ENCODE measurements at regions of chr5 and their contacts with region 1.

Region 1: GRCh38 chr5:178232124-178232919 is at the start of gene PHYKPL:
- DNase-seq: peak; percentile 58
- ATAC-seq: peak; percentile 79
- H3K4me3 ChIP-seq: peak within 1 kb of the TSS; percentile 72
- H3K27ac ChIP-seq: peak within 1 kb of the TSS; percentile 69
- H3K4me1 ChIP-seq: peaks cover 9% of the 10 kb centered on the region
- H3K27me3 ChIP-seq: no peaks in the 10 kb centered on the region
- CTCF ChIP-seq: 0 out of 2 replicates have a peak, but pooled peaks have one; percentile 16
- POLR2A ChIP-seq: peak; percentile 17; the same call in 1 of the 2 replicates
- RAD21 ChIP-seq: no peak
- total RNA-seq, gene PHYKPL: 8.6 and 10.0 TPM in 2 replicates

Region 2: DNA sequence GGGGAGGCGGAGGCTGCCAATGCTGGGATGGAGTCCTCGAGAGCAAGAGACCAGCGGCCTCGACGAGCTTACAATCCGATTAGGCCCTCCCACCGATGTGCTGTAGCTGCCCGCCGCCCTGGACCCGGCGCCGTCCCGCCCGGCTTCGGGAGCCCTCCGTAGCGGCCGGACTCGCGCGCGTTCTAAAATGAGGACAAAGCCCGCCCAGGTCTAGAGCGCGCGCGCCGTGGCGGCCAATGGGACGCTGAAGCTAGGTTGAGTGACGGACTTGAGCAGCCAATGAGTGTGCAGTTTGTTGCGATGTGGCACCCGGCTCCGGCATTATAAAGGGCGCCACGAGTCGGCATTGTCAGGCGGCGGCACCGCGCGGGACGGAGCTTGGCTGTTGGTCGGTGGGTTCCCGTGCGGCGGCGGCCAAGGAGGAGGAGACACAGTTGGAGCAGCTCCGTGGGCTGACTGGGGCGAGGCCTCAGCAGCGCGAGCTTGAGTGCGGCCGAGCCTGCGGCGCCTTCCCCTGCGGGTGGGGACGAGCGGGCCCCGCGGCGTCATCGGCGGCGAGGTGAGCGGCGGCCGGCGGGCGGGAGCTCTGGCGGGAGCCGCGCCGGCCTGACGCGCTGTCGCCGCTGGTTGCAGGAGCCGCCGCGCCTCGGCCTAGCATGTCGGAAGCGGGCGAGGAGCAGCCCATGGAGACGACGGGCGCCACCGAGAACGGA is 28.0 kb before region 1 on chr5 and contains the start of gene HNRNPAB:
- CTCF ChIA-PET with region 1: no interaction called
- POLR2A ChIA-PET with region 1: no interaction called
- dilution Hi-C with region 1: no loop called
- in situ Hi-C with region 1: no loop called
- intact Hi-C with region 1: loop called (anchors 1 kb)
- DNase-seq: peak; percentile 96
- ATAC-seq: peak; percentile 79
- H3K4me3 ChIP-seq: peak within 1 kb of the TSS; percentile 70
- H3K27ac ChIP-seq: peak within 1 kb of the TSS; percentile 54; the same call in 1 of the 2 replicates
- H3K4me1 ChIP-seq: peaks cover 11% of the 10 kb centered on the region
- H3K27me3 ChIP-seq: no peaks in the 10 kb centered on the region
- CTCF ChIP-seq: no peak
- POLR2A ChIP-seq: peak; percentile 100
- RAD21 ChIP-seq: no peak
- total RNA-seq, gene HNRNPAB: 32.1 and 54.4 TPM in 2 replicates

Region 3: GRCh38 chr5:178551059-178551458 is 318.7 kb after region 1 on chr5:
- CTCF ChIA-PET with region 1: no interaction called
- POLR2A ChIA-PET with region 1: no interaction called
- dilution Hi-C with region 1: no loop called
- in situ Hi-C with region 1: no loop called
- intact Hi-C with region 1: loop called (anchors 1 kb)
- DNase-seq: peak; percentile 36
- ATAC-seq: peak; percentile 42; the same call in 1 of the 2 replicates
- H3K4me3 ChIP-seq: no peak overlapping the region
- H3K27ac ChIP-seq: no peak overlapping the region
- H3K4me1 ChIP-seq: no peaks in the 10 kb centered on the region
- H3K27me3 ChIP-seq: no peaks in the 10 kb centered on the region
- CTCF ChIP-seq: peak; percentile 32; the same call in 1 of the 2 replicates
- POLR2A ChIP-seq: no peak
- RAD21 ChIP-seq: no peak

Region 4: DNA sequence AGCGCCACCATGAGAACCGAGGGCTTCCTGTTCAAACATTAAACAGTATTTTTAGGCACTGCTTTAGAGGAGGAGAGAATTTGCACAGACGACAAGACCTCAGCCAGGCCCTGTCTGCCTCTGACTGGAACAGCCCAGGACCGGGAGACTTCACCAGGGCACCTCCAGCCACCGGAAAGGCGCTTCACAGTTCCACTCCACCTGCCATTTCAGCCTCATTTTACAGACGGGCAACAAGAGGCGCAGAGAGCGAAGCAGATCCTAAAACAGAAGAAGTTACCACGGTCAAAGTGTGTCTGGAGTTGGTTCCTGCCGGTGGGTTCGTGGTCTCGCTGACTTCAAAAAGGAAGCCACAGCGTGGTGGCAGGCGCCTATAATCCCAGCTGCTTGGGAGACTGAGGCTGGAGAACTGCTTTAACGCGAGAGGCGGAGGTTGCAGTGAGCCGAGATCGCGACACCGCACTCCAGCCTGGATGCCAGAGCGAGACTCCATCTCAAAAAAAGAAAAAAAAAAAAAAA is 329.5 kb after region 1 on chr5:
- CTCF ChIA-PET with region 1: no interaction called
- POLR2A ChIA-PET with region 1: no interaction called
- dilution Hi-C with region 1: no loop called
- in situ Hi-C with region 1: no loop called
- intact Hi-C with region 1: no loop called
- DNase-seq: no peak
- ATAC-seq: no peak
- H3K4me3 ChIP-seq: no peak overlapping the region
- H3K27ac ChIP-seq: no peak overlapping the region
- H3K4me1 ChIP-seq: no peaks in the 10 kb centered on the region
- H3K27me3 ChIP-seq: no peaks in the 10 kb centered on the region
- CTCF ChIP-seq: no peak
- POLR2A ChIP-seq: no peak
- RAD21 ChIP-seq: no peak

Region 5: GRCh38 chr5:178602752-178603151 is 370.4 kb after region 1 on chr5:
- CTCF ChIA-PET with region 1: no interaction called
- POLR2A ChIA-PET with region 1: no interaction called
- dilution Hi-C with region 1: no loop called
- in situ Hi-C with region 1: no loop called
- intact Hi-C with region 1: no loop called
- DNase-seq: peak; percentile 72
- ATAC-seq: peak; percentile 56
- H3K4me3 ChIP-seq: no peak overlapping the region
- H3K27ac ChIP-seq: no peak overlapping the region
- H3K4me1 ChIP-seq: peaks cover 2% of the 10 kb centered on the region; the same call in 1 of the 2 replicates
- H3K27me3 ChIP-seq: no peaks in the 10 kb centered on the region
- CTCF ChIP-seq: no peak
- POLR2A ChIP-seq: no peak
- RAD21 ChIP-seq: no peak

Measured in IMR-90 (cell line).